ENCODE measurements at regions of chrX and their contacts with region 1.

Region 1: DNA sequence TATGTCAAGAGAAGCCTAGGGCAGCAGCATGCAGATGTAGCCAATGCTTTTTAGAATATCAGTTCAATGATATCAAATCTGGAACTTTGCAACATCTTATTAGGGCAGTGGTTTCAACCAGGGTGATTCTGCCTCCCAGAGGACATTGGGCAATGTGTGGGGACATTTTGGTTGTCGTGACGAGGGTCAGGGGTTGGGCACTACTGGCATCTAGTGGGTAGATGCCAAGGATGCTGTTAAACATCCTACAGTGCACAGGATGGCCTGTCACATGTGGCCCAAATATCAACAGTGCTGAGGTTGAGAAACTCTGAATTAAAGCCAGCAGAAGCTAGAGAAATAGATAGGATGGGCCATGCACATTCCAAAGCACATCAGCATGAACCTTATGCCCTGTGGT is 152.3 kb downstream of the AMELX start:
- H3K4me3 Mint-ChIP-seq: no peak overlapping the region
- H3K27ac Mint-ChIP-seq: no peak overlapping the region
- H3K4me1 Mint-ChIP-seq: no peaks in the 10 kb centered on the region
- H3K27me3 Mint-ChIP-seq: peaks cover 3% of the 10 kb centered on the region

Region 2: DNA sequence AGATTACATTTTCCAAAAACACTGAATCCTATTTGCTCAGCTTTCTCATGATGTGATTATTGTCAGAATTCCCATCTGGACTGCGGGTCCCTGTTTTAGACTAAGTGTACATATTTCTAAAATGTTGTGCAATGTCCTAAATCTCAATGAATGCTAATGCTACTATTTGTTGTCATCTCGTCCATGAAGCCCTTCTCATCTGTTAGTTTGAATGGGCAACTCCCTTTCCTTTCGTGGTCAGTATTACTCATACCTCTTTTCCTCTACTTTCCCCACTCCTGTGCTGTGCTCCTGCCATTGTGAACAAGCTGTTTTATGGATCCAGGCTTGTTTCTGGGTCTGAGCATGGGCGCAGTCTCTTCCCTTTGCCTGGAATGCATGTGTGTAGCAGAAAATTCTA is 916.2 kb before region 1 on chrX:
- intact Hi-C with region 1: no loop called
- H3K4me3 Mint-ChIP-seq: no peak overlapping the region
- H3K27ac Mint-ChIP-seq: no peak overlapping the region
- H3K4me1 Mint-ChIP-seq: no peaks in the 10 kb centered on the region
- H3K27me3 Mint-ChIP-seq: no peaks in the 10 kb centered on the region

Region 3: GRCh38 chrX:11381464-11381863 is 64.1 kb before region 1 on chrX:
- intact Hi-C with region 1: loop called (anchors 10 kb)
- H3K4me3 Mint-ChIP-seq: no peak overlapping the region
- H3K27ac Mint-ChIP-seq: no peak overlapping the region
- H3K4me1 Mint-ChIP-seq: peaks cover 10% of the 10 kb centered on the region
- H3K27me3 Mint-ChIP-seq: no peaks in the 10 kb centered on the region

Measured in dendritic cell treated with granulocyte-macrophage colony-stimulating factor and Interleukin-4, amounts not matched to agents 40 ng/mL and 50 ng/mL, for 4 days (primary cell).